K562 (cell line): ENCODE measurements at regions of chr2 and their contacts with region 1.

Region 1: GRCh38 chr2:199940373-199940772 is 14.9 kb downstream of the TYW5 start:
- DNase-seq: no peak
- ATAC-seq: peak; percentile 76
- H3K4me3 ChIP-seq: no peak overlapping the region
- H3K27ac ChIP-seq: no peak overlapping the region
- H3K4me1 ChIP-seq: no peaks in the 10 kb centered on the region
- H3K27me3 ChIP-seq: no peaks in the 10 kb centered on the region
- CTCF ChIP-seq: peak in 1 of 3 experiments; percentile 44; a peak in 2 of 6 replicates
- EP300 ChIP-seq: no peak
- POLR2A ChIP-seq: no peak
- RAD21 ChIP-seq: peak; percentile 18 to 52; a peak in 2 of 4 replicates

Region 2: GRCh38 chr2:198309673-198310280 is 1630.6 kb before region 1 on chr2:
- CTCF ChIA-PET with region 1: no interaction called
- POLR2A ChIA-PET with region 1: no interaction called
- in situ Hi-C with region 1: no loop called
- intact Hi-C with region 1: loop called (anchors 10 kb)
- DNase-seq: peak; percentile 54 to 61 (median 57)
- ATAC-seq: peak; percentile 63; the same call in 1 of the 3 replicates
- H3K4me3 ChIP-seq: no peak overlapping the region
- H3K27ac ChIP-seq: no peak overlapping the region
- H3K4me1 ChIP-seq: no peaks in the 10 kb centered on the region
- H3K27me3 ChIP-seq: peaks cover 0 to 8% of the 10 kb centered on the region in 2 experiments; a peak in 1 of 5 replicates
- CTCF ChIP-seq: peak; percentile 57 to 77 (median 59)
- EP300 ChIP-seq: no peak
- POLR2A ChIP-seq: no peak
- RAD21 ChIP-seq: peak; percentile 30 to 53; a peak in 3 of 4 replicates

Region 3: GRCh38 chr2:199395311-199395710 is 545.1 kb before region 1 on chr2:
- CTCF ChIA-PET with region 1: no interaction called
- POLR2A ChIA-PET with region 1: no interaction called
- in situ Hi-C with region 1: no loop called
- intact Hi-C with region 1: no loop called
- DNase-seq: no peak
- ATAC-seq: no peak
- H3K4me3 ChIP-seq: no peak overlapping the region
- H3K27ac ChIP-seq: no peak overlapping the region
- H3K4me1 ChIP-seq: no peaks in the 10 kb centered on the region; a peak in 1 of 5 replicates
- H3K27me3 ChIP-seq: no peaks in the 10 kb centered on the region
- CTCF ChIP-seq: no peak
- EP300 ChIP-seq: no peak
- POLR2A ChIP-seq: no peak
- RAD21 ChIP-seq: no peak

Region 4: DNA sequence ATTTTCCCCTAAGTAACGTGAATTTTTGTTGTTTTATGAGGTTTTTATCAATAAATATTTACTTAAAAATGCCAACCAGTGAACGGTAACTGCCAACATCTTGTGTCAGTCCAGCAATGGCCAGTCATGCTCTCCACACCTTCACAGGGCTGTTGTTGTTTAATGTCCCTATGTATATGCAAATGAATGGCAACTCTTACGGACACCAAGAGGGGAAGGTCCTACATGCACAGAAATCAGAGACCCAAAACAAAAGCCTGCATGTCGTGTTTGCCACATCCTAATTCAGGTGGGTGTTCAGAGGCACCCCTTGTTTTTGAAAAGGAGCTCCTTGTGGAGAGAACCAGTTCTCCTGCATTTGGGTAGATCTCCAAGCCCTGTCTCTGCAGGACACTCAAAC is 84.6 kb before region 1 on chr2:
- CTCF ChIA-PET with region 1: no interaction called
- POLR2A ChIA-PET with region 1: no interaction called
- in situ Hi-C with region 1: no loop called
- intact Hi-C with region 1: loop called (anchors 5 kb)
- DNase-seq: no peak
- ATAC-seq: no peak
- H3K4me3 ChIP-seq: no peak overlapping the region
- H3K27ac ChIP-seq: no peak overlapping the region
- H3K4me1 ChIP-seq: peaks cover 2 to 3% of the 10 kb centered on the region in 2 experiments; a peak in 3 of 5 replicates
- H3K27me3 ChIP-seq: no peaks in the 10 kb centered on the region; a peak in 1 of 5 replicates
- CTCF ChIP-seq: no peak
- EP300 ChIP-seq: no peak
- POLR2A ChIP-seq: no peak
- RAD21 ChIP-seq: no peak

Region 5: GRCh38 chr2:200383383-200384110 is 443.2 kb after region 1 on chr2:
- CTCF ChIA-PET with region 1: no interaction called
- POLR2A ChIA-PET with region 1: no interaction called
- in situ Hi-C with region 1: no loop called
- intact Hi-C with region 1: no loop called
- DNase-seq: no peak
- ATAC-seq: no peak
- H3K4me3 ChIP-seq: no peak overlapping the region
- H3K27ac ChIP-seq: no peak overlapping the region
- H3K4me1 ChIP-seq: peaks cover 2 to 30% of the 10 kb centered on the region in 2 experiments; a peak in 4 of 5 replicates
- H3K27me3 ChIP-seq: no peaks in the 10 kb centered on the region
- CTCF ChIP-seq: no peak
- EP300 ChIP-seq: no peak
- POLR2A ChIP-seq: no peak
- RAD21 ChIP-seq: no peak